Naive thymus-derived CD4-positive, alpha-beta T cell (primary cell): ENCODE measurements at regions of chr2 and their contacts with region 1.

Region 1: GRCh38 chr2:160332318-160332717 is 132.2 kb upstream of the ITGB6 start:
- DNase-seq: peak in 4 of 9 donors; percentile 8 to 26 (median 16)
- ATAC-seq: peak; percentile 66
- H3K4me3 ChIP-seq: no peak overlapping the region
- H3K4me3 Mint-ChIP-seq: peak overlapping the region in 9 of 10 donors; percentile 29 to 69 (median 52)
- H3K27ac ChIP-seq: no peak overlapping the region
- H3K27ac Mint-ChIP-seq: peak overlapping the region in 8 of 9 donors; percentile 0 to 90 (median 60)
- H3K4me1 ChIP-seq: peaks cover 39 to 57% of the 10 kb centered on the region in 2 donors
- H3K4me1 Mint-ChIP-seq: peaks cover 68 to 98% (median 96%) of the 10 kb centered on the region in 7 donors
- H3K27me3 ChIP-seq: no peaks in the 10 kb centered on the region
- H3K27me3 Mint-ChIP-seq: no peaks in the 10 kb centered on the region

Region 2: GRCh38 chr2:160317181-160318099 is 14.9 kb before region 1 on chr2:
- CTCF ChIA-PET with region 1: no interaction called
- POLR2A ChIA-PET with region 1: interaction called, 3 read pairs
- intact Hi-C with region 1: loop called in 1 of 2 experiments (anchors 2 kb)
- DNase-seq: no peak
- ATAC-seq: no peak
- H3K4me3 ChIP-seq: no peak overlapping the region
- H3K4me3 Mint-ChIP-seq: peak overlapping the region in 1 of 10 donors; percentile 20
- H3K27ac ChIP-seq: no peak overlapping the region
- H3K27ac Mint-ChIP-seq: peak overlapping the region in 3 of 9 donors; percentile 45 to 74 (median 46)
- H3K4me1 ChIP-seq: peaks cover 5 to 17% of the 10 kb centered on the region in 2 donors
- H3K4me1 Mint-ChIP-seq: peaks cover 15 to 94% (median 75%) of the 10 kb centered on the region in 7 donors
- H3K27me3 ChIP-seq: no peaks in the 10 kb centered on the region
- H3K27me3 Mint-ChIP-seq: no peaks in the 10 kb centered on the region

Region 3: GRCh38 chr2:160345071-160345764 is 12.9 kb after region 1 on chr2:
- CTCF ChIA-PET with region 1: interaction called, 5 read pairs
- POLR2A ChIA-PET with region 1: no interaction called
- intact Hi-C with region 1: loop called in 1 of 2 experiments (anchors 1 kb)
- DNase-seq: no peak
- ATAC-seq: peak; percentile 22
- H3K4me3 ChIP-seq: no peak overlapping the region
- H3K4me3 Mint-ChIP-seq: peak overlapping the region in 9 of 10 donors; percentile 8 to 84 (median 45)
- H3K27ac ChIP-seq: no peak overlapping the region
- H3K27ac Mint-ChIP-seq: peak overlapping the region; percentile 3 to 89 (median 25)
- H3K4me1 ChIP-seq: peaks cover 8 to 17% of the 10 kb centered on the region in 2 donors
- H3K4me1 Mint-ChIP-seq: peaks cover 35 to 95% (median 93%) of the 10 kb centered on the region in 7 donors
- H3K27me3 ChIP-seq: no peaks in the 10 kb centered on the region
- H3K27me3 Mint-ChIP-seq: no peaks in the 10 kb centered on the region

Region 4: DNA sequence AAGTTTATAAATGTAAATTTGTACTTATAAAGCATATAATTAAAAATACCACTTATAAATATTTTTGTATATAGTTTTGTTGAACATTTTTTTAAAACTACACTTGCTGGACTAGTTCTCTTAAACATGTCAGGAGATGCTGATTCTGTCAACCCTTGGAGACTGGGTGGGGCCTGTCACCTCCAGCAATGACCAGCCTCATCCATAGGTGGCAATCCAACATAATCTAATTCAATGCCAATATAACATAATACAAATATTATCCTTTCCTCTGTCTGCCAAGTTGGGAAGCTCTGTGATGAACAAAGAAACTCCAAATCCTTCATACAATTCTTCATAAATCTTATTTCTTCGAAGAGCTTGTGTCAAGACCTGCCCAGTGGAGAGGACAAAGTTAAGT is 20.8 kb after region 1 on chr2:
- CTCF ChIA-PET with region 1: interaction called, 3 read pairs
- POLR2A ChIA-PET with region 1: no interaction called
- intact Hi-C with region 1: loop called in 1 of 2 experiments (anchors 1 kb)
- DNase-seq: peak in 6 of 9 donors; percentile 14 to 45 (median 24)
- ATAC-seq: peak; percentile 72
- H3K4me3 ChIP-seq: no peak overlapping the region
- H3K4me3 Mint-ChIP-seq: peak overlapping the region in 1 of 10 donors; percentile 36
- H3K27ac ChIP-seq: no peak overlapping the region
- H3K27ac Mint-ChIP-seq: peak overlapping the region in 4 of 9 donors; percentile 51 to 81 (median 66)
- H3K4me1 ChIP-seq: peaks cover 0 to 5% of the 10 kb centered on the region in 2 donors
- H3K4me1 Mint-ChIP-seq: peaks cover 47 to 91% (median 83%) of the 10 kb centered on the region in 7 donors
- H3K27me3 ChIP-seq: no peaks in the 10 kb centered on the region
- H3K27me3 Mint-ChIP-seq: no peaks in the 10 kb centered on the region

Region 5: DNA sequence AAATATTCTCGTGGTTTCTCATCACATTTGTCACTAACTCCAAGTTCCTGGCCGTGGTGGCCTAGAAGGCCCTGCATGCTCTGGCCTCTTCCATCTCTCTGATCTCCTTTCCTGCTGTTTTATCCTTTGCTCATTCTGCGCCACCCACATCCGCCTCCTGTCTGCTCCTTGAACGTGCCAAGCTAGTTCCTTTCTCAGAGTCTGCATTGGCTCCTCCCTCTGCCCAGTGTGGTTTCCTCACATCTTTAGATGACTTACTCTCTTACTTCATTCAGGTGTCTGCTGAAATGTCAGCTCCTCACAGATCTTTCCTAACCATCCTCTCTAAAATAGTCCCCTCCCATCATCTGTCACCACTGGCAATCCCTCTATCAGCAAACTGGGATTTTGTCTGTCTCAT is 319.9 kb after region 1 on chr2:
- CTCF ChIA-PET with region 1: no interaction called
- POLR2A ChIA-PET with region 1: no interaction called
- intact Hi-C with region 1: loop called in 1 of 2 experiments (anchors 5 kb)
- DNase-seq: peak; percentile 20 to 81 (median 72)
- ATAC-seq: peak; percentile 97
- H3K4me3 ChIP-seq: no peak overlapping the region
- H3K4me3 Mint-ChIP-seq: peak overlapping the region; percentile 13 to 79 (median 52)
- H3K27ac ChIP-seq: no peak overlapping the region
- H3K27ac Mint-ChIP-seq: peak overlapping the region in 8 of 9 donors; percentile 1 to 47 (median 8)
- H3K4me1 ChIP-seq: peaks cover 11 to 22% of the 10 kb centered on the region in 2 donors
- H3K4me1 Mint-ChIP-seq: peaks cover 23 to 45% (median 34%) of the 10 kb centered on the region in 7 donors
- H3K27me3 ChIP-seq: no peaks in the 10 kb centered on the region
- H3K27me3 Mint-ChIP-seq: peaks cover 3 to 10% (median 8%) of the 10 kb centered on the region in 5 donors